IMR-90 (cell line): ENCODE measurements at regions of chr3 and their contacts with region 1.

Region 1: DNA sequence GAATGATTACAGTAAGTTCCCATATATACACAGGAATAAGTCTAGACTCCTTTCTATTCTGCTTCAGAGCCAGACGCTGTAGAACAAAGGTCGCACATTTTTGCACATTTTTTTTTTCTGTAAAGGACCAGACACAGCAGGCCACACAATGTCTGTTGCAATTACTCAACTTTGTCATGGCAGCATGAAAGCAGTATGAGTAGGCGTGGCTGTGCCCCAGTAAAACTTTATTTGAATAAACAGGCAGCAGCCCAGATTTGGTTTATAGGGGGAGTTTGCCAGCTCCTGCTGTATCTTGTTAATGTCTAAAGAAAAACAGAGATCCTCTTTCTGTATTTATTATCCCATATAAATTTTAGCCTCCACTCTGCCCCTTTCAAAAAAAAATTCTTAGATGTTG is 708.3 kb downstream of the FHIT start:
- DNase-seq: no peak
- ATAC-seq: no peak
- H3K4me3 ChIP-seq: no peak overlapping the region
- H3K27ac ChIP-seq: no peak overlapping the region
- H3K4me1 ChIP-seq: no peaks in the 10 kb centered on the region
- H3K27me3 ChIP-seq: no peaks in the 10 kb centered on the region
- CTCF ChIP-seq: no peak
- POLR2A ChIP-seq: no peak
- RAD21 ChIP-seq: no peak

Region 2: GRCh38 chr3:60609446-60609845 is 66.5 kb after region 1 on chr3:
- CTCF ChIA-PET with region 1: no interaction called
- POLR2A ChIA-PET with region 1: no interaction called
- dilution Hi-C with region 1: no loop called
- in situ Hi-C with region 1: loop called (anchors 10 kb)
- intact Hi-C with region 1: no loop called
- DNase-seq: no peak
- ATAC-seq: no peak
- H3K4me3 ChIP-seq: no peak overlapping the region
- H3K27ac ChIP-seq: no peak overlapping the region
- H3K4me1 ChIP-seq: no peaks in the 10 kb centered on the region
- H3K27me3 ChIP-seq: no peaks in the 10 kb centered on the region
- CTCF ChIP-seq: no peak
- POLR2A ChIP-seq: no peak
- RAD21 ChIP-seq: no peak